ENCODE measurements at regions of chr7 and their contacts with region 1.

Region 1: GRCh38 chr7:47991741-47992311 is 12.4 kb upstream of the HUS1 start:
- DNase-seq: peak; percentile 64
- H3K4me3 ChIP-seq: peak overlapping the region; percentile 27 to 47 (median 34)
- H3K27ac ChIP-seq: no peak overlapping the region
- H3K4me1 ChIP-seq: peaks cover 7% of the 10 kb centered on the region
- H3K27me3 ChIP-seq: no peaks in the 10 kb centered on the region
- CTCF ChIP-seq: peak; percentile 70 to 78
- POLR2A ChIP-seq: no peak

Region 2: GRCh38 chr7:47893247-47893646 is 98.6 kb before region 1 on chr7:
- CTCF ChIA-PET with region 1: no interaction called
- POLR2A ChIA-PET with region 1: no interaction called
- dilution Hi-C with region 1: no loop called
- intact Hi-C with region 1: no loop called
- DNase-seq: no peak
- H3K4me3 ChIP-seq: no peak overlapping the region
- H3K27ac ChIP-seq: no peak overlapping the region
- H3K4me1 ChIP-seq: no peaks in the 10 kb centered on the region
- H3K27me3 ChIP-seq: peaks cover 0 to 2% of the 10 kb centered on the region in 2 experiments
- CTCF ChIP-seq: peak; percentile 38 to 39
- POLR2A ChIP-seq: no peak

Region 3: DNA sequence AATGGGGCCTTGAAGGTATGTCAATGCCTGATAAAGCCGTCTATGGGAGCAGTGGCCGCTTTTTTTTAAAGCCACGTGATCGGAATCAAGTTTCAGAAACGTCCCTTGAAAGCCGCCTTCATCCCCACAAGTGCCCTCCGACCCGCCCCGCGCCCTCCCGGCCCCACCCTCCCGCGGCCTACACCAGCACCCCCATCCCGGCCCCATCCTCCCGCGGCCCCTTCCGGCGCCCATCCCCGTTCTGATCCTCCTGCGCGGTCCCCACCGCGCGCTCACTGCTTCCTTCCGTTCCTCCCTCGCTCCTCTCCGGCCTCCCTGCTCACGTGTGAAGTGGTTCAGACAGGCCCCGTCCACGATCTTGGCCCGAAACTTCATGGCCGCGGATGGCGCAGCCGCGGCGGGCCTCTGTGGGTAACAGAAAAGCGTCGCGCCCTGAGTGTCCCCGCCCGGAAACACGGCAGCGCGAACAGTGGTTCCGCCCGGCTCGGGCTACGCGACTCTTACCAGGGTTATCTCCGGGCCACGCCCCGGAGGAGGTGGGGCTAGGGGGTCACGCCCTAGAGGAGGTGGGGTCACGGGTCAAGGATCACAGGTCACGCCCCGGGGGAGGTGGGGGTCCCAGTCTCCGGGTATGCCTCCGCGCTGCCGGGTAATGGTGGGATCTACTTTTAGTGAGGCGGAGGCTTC is 12.5 kb before region 1 on chr7 and contains the start of gene HUS1:
- CTCF ChIA-PET with region 1: interaction called, 9 read pairs
- POLR2A ChIA-PET with region 1: no interaction called
- dilution Hi-C with region 1: no loop called
- intact Hi-C with region 1: loop called (anchors 1 kb)
- DNase-seq: peak; percentile 52
- H3K4me3 ChIP-seq: peak within 1 kb of the TSS; percentile 70 to 93 (median 89)
- H3K27ac ChIP-seq: peak within 1 kb of the TSS; percentile 46
- H3K4me1 ChIP-seq: peaks cover 11% of the 10 kb centered on the region
- H3K27me3 ChIP-seq: peaks cover 0 to 4% of the 10 kb centered on the region in 2 experiments
- CTCF ChIP-seq: no peak
- POLR2A ChIP-seq: peak; percentile 43
- total RNA-seq, gene HUS1: 45.0 and 49.7 TPM in 2 replicates

Region 4: GRCh38 chr7:48004638-48005037 is 12.8 kb after region 1 on chr7:
- CTCF ChIA-PET with region 1: interaction called, 10 read pairs
- POLR2A ChIA-PET with region 1: no interaction called
- dilution Hi-C with region 1: no loop called
- intact Hi-C with region 1: no loop called
- DNase-seq: no peak
- H3K4me3 ChIP-seq: no peak overlapping the region
- H3K27ac ChIP-seq: no peak overlapping the region
- H3K4me1 ChIP-seq: no peaks in the 10 kb centered on the region
- H3K27me3 ChIP-seq: peaks cover 4 to 7% of the 10 kb centered on the region in 2 experiments
- CTCF ChIP-seq: no peak
- POLR2A ChIP-seq: no peak

Region 5: GRCh38 chr7:48035301-48035966 is 43.6 kb after region 1 on chr7 and contains the start of gene C7orf57:
- CTCF ChIA-PET with region 1: interaction called, 5 read pairs
- POLR2A ChIA-PET with region 1: no interaction called
- dilution Hi-C with region 1: no loop called
- intact Hi-C with region 1: loop called (anchors 1 kb)
- DNase-seq: peak; percentile 85
- H3K4me3 ChIP-seq: peak within 1 kb of the TSS; percentile 19 to 51 (median 43)
- H3K27ac ChIP-seq: no peak within 1 kb of the TSS
- H3K4me1 ChIP-seq: peaks cover 6% of the 10 kb centered on the region
- H3K27me3 ChIP-seq: peaks cover 16 to 26% of the 10 kb centered on the region in 2 experiments
- CTCF ChIP-seq: peak in 1 of 2 donors; percentile 37
- POLR2A ChIP-seq: no peak
- total RNA-seq, gene C7orf57: not detected in 2 replicates

Region 6: GRCh38 chr7:48101968-48102367 is 110.1 kb after region 1 on chr7:
- CTCF ChIA-PET with region 1: interaction called, 22 read pairs
- POLR2A ChIA-PET with region 1: no interaction called
- dilution Hi-C with region 1: no loop called
- intact Hi-C with region 1: no loop called
- DNase-seq: no peak
- H3K4me3 ChIP-seq: no peak overlapping the region
- H3K27ac ChIP-seq: no peak overlapping the region
- H3K4me1 ChIP-seq: peaks cover 13% of the 10 kb centered on the region
- H3K27me3 ChIP-seq: no peaks in the 10 kb centered on the region
- CTCF ChIP-seq: peak; percentile 38 to 43
- POLR2A ChIP-seq: no peak

Region 7: DNA sequence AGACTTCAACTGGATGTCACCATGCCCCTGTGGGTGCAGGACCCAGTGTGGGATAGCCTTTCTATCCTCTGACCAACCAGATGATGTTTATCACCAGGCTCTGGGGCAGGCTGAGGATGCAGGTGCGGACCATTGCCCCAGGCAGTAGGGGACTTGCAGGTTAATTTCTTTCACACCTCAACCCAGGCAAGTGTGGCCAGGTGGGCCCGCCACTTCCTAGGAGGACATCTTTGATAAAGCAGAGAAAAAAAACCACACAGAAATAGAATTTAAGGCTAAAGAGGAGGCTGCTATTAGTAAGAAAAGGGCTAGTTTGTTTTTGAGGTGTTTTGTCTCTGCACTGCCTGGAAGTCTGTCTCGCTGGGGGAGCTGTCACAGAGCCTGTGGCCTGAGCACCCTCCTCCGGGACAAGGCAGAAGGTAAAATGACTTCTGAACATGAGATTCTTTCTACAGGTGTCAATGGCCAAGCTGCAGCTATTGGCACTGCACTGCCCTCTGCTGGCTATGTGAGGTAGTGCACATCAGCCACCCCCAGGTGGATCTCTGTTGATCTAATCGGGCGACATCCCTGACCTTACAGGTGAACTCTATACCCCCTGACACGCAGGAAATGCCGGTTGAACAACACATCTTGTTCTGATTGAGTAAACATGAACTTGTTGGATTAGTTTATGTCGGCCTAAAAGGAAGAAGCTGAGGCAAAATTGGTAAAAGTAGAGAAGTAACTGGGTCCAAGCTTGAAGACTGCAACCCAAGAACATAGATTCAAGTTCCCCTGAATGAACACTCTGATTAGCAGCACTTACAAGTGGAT is 118.2 kb after region 1 on chr7:
- CTCF ChIA-PET with region 1: interaction called, 137 read pairs
- POLR2A ChIA-PET with region 1: no interaction called
- dilution Hi-C with region 1: no loop called
- intact Hi-C with region 1: loop called (anchors 1 kb)
- DNase-seq: peak; percentile 69
- H3K4me3 ChIP-seq: no peak overlapping the region
- H3K27ac ChIP-seq: no peak overlapping the region
- H3K4me1 ChIP-seq: no peaks in the 10 kb centered on the region
- H3K27me3 ChIP-seq: no peaks in the 10 kb centered on the region
- CTCF ChIP-seq: peak; percentile 97
- POLR2A ChIP-seq: no peak

Region 8: DNA sequence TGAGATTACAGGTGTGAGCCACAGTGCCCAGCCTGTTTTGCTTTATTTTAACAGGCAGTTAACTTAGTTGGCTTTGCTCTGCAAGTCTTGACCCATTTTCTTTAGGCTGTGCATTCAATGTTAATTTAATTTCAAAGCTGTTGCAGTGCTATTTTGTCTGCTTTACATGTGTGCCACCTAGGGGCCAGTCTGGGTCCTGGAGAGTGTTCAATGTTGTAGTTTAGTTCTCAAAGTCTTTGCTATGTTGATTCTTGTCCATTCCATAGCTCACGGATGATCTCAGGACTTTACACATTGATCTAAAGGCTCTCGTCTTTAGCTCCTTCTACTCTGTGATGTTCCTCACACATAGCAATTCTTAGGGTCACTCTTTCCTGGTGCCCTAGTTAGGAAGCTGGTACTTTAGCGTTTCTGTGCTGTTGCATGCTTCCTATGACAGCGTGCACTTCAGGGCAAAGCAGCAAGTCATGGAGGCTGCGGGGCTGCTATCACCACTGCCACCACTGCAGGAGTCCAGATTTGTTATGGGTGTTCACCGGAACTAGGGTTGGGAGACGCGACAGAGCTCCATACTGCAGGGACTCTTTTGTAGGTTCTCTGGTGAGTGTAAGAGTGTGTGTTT is 163.1 kb after region 1 on chr7:
- CTCF ChIA-PET with region 1: interaction called, 18 read pairs
- POLR2A ChIA-PET with region 1: no interaction called
- dilution Hi-C with region 1: no loop called
- intact Hi-C with region 1: loop called (anchors 1 kb)
- DNase-seq: peak; percentile 55
- H3K4me3 ChIP-seq: no peak overlapping the region
- H3K27ac ChIP-seq: no peak overlapping the region
- H3K4me1 ChIP-seq: no peaks in the 10 kb centered on the region
- H3K27me3 ChIP-seq: peaks cover 7 to 13% of the 10 kb centered on the region in 2 experiments
- CTCF ChIP-seq: peak; percentile 53 to 66
- POLR2A ChIP-seq: no peak

Region 9: GRCh38 chr7:48466713-48467112 is 474.9 kb after region 1 on chr7:
- CTCF ChIA-PET with region 1: no interaction called
- POLR2A ChIA-PET with region 1: no interaction called
- dilution Hi-C with region 1: no loop called
- intact Hi-C with region 1: no loop called
- DNase-seq: no peak
- H3K4me3 ChIP-seq: no peak overlapping the region
- H3K27ac ChIP-seq: no peak overlapping the region
- H3K4me1 ChIP-seq: no peaks in the 10 kb centered on the region
- H3K27me3 ChIP-seq: no peaks in the 10 kb centered on the region
- CTCF ChIP-seq: no peak
- POLR2A ChIP-seq: no peak

Region 10: DNA sequence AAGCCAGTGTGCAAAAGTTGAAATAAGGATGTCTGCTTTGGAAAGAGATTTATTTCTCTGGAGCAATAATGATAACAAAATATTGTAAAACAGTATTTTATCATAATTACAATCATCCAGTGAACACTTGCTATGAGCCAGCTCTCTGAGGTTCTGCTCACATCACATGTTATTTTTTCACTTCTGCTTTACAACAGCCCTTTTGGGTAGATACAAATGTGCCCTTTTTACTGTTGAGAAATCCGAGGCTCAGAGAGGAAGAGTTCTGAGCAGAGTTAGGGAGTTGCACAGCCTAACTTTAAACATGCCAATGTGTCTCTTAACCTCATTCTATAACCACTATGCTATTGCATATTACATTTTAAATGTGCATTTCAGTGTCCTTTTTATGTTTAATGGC is 700.0 kb after region 1 on chr7:
- CTCF ChIA-PET with region 1: no interaction called
- POLR2A ChIA-PET with region 1: no interaction called
- dilution Hi-C with region 1: no loop called
- intact Hi-C with region 1: no loop called
- DNase-seq: no peak
- H3K4me3 ChIP-seq: no peak overlapping the region
- H3K27ac ChIP-seq: no peak overlapping the region
- H3K4me1 ChIP-seq: no peaks in the 10 kb centered on the region
- H3K27me3 ChIP-seq: no peaks in the 10 kb centered on the region
- CTCF ChIP-seq: no peak
- POLR2A ChIP-seq: no peak

Measured in endothelial cell of umbilical vein (primary cell).